Right cardiac atrium (tissue), 5 donors: ENCODE measurements at regions of chr15 and their contacts with region 1.

Region 1: DNA sequence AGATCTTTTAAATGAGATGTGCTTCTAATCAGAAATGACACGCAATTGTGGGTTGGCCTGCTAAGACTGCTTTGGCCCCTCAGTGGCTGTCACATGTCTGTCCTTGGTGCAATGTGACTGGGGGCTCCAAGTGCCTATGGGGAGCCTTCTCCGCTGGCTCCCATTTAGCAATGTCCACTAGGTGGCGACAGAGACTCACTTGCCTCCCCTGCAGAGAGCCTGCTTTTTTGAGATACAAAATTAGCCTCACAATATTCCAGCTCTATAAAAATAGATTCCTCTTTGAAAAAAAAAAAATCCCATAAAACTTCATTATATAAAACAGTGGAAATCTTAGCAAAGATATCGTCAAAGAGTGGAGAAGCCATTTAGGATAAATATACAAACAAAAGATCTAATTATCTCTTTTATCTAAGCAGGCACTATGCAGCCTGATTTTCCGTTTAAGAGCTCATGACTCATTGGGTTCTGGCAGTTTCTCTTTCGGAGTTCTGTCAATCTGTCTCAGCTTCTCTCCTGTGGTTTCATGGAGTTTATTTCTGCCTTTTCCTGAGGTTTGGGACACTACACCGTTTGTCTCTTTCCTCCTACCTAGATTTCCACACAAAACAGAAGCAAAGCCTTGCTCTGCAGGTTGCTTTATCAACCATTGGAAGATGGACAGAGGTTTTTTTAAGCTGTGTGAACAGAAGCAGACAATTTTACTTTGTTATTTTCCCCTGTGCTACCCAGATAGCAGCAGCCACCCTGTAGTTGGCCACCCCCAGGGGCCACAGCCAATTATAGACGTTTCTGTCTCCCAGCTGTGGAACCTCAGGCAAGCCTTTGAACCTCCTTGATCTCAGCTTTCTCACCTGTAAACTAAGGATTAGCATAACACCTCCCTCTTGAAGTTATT is 68.4 kb upstream of the TNFAIP8L3 start:
- DNase-seq: peak; percentile 63 to 87 (median 78)
- ATAC-seq: peak; percentile 87 to 92
- H3K4me3 ChIP-seq: no peak overlapping the region
- H3K27ac ChIP-seq: no peak overlapping the region
- H3K4me1 ChIP-seq: no peaks in the 10 kb centered on the region
- H3K27me3 ChIP-seq: no peaks in the 10 kb centered on the region

Region 2: GRCh38 chr15:51192521-51193280 is 29.6 kb after region 1 on chr15:
- intact Hi-C with region 1: loop called in 3 of 4 experiments (anchors 1 to 5 kb)
- DNase-seq: peak; percentile 89 to 96 (median 95)
- ATAC-seq: peak; percentile 87 to 90
- H3K4me3 ChIP-seq: no peak overlapping the region
- H3K27ac ChIP-seq: no peak overlapping the region
- H3K4me1 ChIP-seq: no peaks in the 10 kb centered on the region
- H3K27me3 ChIP-seq: no peaks in the 10 kb centered on the region

Region 3: DNA sequence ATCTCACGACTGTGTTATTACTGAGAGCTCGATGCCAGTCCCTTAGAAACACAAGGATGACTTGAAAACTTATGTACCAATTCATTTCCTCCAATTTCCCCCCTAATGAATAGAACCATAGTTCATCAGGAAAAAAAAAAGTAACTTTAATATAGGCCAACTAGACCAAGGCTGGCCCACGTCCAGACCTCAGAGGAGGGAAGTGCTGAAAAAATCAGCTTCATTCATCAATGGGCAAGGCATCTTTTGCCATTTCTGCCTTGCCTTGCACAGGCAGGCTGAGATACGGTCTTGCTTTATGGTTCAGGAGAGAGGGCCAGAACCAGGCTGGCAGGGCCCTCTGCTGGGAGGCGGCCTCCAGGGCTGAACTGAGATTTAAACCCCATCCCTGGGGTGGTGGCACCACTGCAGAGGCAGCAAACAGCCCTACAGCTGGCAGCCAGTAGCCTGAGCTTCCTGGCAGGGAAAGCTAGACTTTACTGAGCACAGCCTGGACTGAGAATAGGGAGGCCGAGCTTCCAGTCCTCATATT is 35.7 kb after region 1 on chr15:
- intact Hi-C with region 1: loop called in 3 of 4 experiments (anchors 1 to 5 kb)
- DNase-seq: no peak
- ATAC-seq: no peak
- H3K4me3 ChIP-seq: no peak overlapping the region
- H3K27ac ChIP-seq: no peak overlapping the region
- H3K4me1 ChIP-seq: no peaks in the 10 kb centered on the region
- H3K27me3 ChIP-seq: no peaks in the 10 kb centered on the region

Region 4: GRCh38 chr15:51450001-51450400 is 286.9 kb after region 1 on chr15:
- intact Hi-C with region 1: no loop called
- DNase-seq: no peak
- ATAC-seq: no peak
- H3K4me3 ChIP-seq: no peak overlapping the region
- H3K27ac ChIP-seq: no peak overlapping the region
- H3K4me1 ChIP-seq: no peaks in the 10 kb centered on the region
- H3K27me3 ChIP-seq: no peaks in the 10 kb centered on the region